Heart right ventricle (tissue), 16 donors: ENCODE measurements at regions of chr1 and their contacts with region 1.

Region 1: DNA sequence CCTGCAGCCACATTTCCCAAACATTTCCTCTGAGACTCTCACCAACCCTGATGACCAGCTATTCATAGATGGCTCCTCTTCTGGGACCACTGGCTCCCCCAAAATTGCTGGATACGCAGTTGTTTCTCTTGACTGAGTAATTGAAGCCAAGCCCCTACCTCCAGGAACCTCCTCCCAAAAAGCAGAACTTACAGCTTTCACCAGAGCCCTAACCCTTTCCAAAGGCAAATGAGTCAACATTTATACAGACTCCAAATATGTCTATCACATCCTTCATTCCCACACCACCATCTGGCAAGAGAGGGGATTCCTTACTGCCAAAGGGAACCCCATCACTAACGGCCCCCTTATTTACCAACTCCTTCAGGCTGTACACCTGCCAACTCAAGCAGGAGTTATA is 20.3 kb upstream of the CA6 start:
- DNase-seq: no peak
- ATAC-seq: no peak
- H3K4me3 ChIP-seq: no peak overlapping the region
- H3K27ac ChIP-seq: no peak overlapping the region
- H3K4me1 ChIP-seq: no peaks in the 10 kb centered on the region
- H3K27me3 ChIP-seq: no peaks in the 10 kb centered on the region
- CTCF ChIP-seq: no peak

Region 2: DNA sequence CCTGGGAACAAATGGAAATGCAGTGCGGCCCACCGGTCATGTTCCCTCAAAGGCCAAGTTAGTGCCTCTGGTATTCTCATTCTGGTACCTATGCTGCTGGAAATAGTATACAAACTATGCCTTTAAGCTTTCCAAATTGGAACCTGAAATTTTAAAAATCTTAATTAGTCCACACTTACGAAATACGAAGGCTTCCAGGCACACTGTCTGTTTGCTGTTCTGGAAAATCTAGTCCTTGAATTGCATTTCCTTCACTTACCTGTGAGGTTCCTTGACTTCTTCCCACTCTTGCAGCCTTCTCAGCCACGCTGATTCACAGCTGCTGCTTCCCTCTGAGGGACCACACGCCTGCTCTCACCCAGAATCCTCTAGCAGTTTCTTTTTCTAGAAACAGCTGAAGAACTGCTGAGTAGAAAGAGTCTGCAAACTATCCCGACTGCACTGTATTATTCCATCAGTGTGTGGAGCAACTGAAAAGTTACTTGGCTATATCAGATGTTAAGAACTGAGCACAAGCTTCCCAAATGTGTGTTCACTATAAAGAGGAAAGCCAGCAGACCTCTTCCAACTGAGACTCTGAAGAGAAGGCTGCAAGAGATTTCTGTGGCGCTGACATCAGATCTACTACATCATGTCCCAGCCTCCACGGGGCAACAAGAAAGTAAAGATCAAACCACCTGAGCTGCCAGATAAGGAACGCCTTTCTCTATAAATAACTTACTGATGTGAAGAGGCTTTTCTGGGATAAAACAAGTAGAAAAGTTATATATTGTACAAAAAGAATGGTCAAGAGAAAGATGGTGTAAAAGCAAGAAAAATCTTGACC is 334.7 kb before region 1 on chr1:
- intact Hi-C with region 1: no loop called
- DNase-seq: no peak
- ATAC-seq: peak in 7 of 8 donors; percentile 47 to 82 (median 56)
- H3K4me3 ChIP-seq: no peak overlapping the region
- H3K27ac ChIP-seq: peak overlapping the region in 1 of 10 donors; percentile 5
- H3K4me1 ChIP-seq: peaks cover 0 to 30% (median 15%) of the 10 kb centered on the region in 9 donors
- H3K27me3 ChIP-seq: no peaks in the 10 kb centered on the region
- CTCF ChIP-seq: no peak

Region 3: GRCh38 chr1:8955406-8955805 is 30.0 kb after region 1 on chr1:
- intact Hi-C with region 1: loop called in 1 of 10 experiments (anchors 5 kb)
- DNase-seq: no peak
- ATAC-seq: no peak
- H3K4me3 ChIP-seq: no peak overlapping the region
- H3K27ac ChIP-seq: no peak overlapping the region
- H3K4me1 ChIP-seq: no peaks in the 10 kb centered on the region
- H3K27me3 ChIP-seq: no peaks in the 10 kb centered on the region
- CTCF ChIP-seq: no peak

Region 4: DNA sequence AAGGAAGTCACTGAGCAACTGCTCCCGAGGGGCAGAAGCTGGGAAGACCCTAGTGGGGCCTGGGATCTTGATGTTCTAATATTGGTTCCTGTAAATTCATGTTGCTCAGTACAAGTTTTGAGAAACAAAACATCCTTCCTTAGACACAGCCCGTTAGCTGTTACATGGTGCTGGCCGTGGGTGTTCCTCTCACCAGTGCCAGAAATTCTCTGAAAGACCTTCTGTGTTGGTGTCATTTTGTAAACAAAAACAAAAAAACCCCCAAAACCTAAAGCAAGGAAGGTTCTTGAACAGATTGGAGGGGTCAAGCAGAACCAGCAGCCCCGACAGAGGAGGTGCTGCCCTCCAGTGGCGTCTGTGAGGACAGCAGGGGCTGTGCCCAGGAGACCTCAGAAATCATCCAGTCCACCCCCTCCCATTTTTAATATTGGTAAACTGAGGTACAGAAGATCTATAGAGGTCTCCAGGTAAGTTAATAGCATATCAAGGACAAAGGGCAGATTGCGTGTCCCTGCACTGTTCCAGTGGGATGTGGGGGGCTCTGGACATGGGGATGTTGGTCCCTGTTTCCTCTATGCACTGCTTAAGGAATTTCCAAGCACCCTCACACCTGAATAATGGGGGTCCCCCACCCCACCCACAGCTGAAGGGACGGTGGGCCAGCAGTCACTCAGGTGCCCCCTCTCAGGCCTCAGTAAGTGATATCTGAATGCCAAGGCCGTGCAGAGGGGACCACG is 62.6 kb after region 1 on chr1:
- intact Hi-C with region 1: loop called in 2 of 10 experiments (anchors 5 kb)
- DNase-seq: peak; percentile 31 to 66
- ATAC-seq: peak in 7 of 8 donors; percentile 61 to 79 (median 70)
- H3K4me3 ChIP-seq: no peak overlapping the region
- H3K27ac ChIP-seq: peak overlapping the region in 1 of 10 donors; percentile 74
- H3K4me1 ChIP-seq: peaks cover 0 to 25% (median 8%) of the 10 kb centered on the region in 9 donors
- H3K27me3 ChIP-seq: no peaks in the 10 kb centered on the region
- CTCF ChIP-seq: peak; percentile 78 to 96 (median 92)

Region 5: GRCh38 chr1:9004700-9005394 is 79.4 kb after region 1 on chr1:
- intact Hi-C with region 1: loop called in 1 of 10 experiments (anchors 5 kb)
- DNase-seq: peak; percentile 71 to 82
- ATAC-seq: peak; percentile 7 to 88 (median 81)
- H3K4me3 ChIP-seq: no peak overlapping the region
- H3K27ac ChIP-seq: no peak overlapping the region
- H3K4me1 ChIP-seq: peaks cover 0 to 8% (median 0%) of the 10 kb centered on the region in 9 donors
- H3K27me3 ChIP-seq: no peaks in the 10 kb centered on the region
- CTCF ChIP-seq: peak; percentile 75 to 98 (median 96)

Region 6: DNA sequence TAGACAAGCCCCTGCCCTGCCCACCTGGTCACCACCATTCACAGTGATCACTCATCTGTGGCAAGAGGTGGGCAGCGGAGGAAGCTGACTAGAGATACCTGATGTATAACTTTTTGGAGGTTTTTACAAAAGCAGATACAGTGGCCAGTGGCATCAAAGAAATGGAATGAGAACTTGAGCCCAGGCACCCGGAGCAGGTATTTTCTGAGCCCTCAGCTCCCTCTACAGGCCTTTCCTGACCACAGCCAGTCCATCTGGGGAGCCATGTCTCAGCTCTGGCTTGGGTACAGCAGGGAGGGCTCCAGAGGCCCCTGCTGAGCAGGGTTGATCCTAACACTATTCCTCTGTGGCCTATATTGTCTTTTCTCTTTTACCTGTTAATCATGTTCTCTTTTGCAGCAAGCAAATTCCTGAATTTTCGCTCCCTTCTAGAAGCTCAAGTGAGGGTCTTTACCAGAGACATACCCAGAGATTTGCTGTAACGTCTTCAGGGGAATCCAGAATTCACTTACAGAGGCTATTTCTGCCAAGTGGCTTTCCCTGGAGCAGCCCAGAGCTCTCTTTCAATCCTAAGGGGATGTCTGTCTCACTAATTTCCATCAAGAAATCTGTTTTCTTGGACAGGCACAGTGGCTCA is 176.2 kb after region 1 on chr1:
- intact Hi-C with region 1: loop called in 6 of 10 experiments (anchors 5 to 10 kb)
- DNase-seq: peak in 1 of 2 donors; percentile 41
- ATAC-seq: peak in 6 of 8 donors; percentile 57 to 69 (median 64)
- H3K4me3 ChIP-seq: no peak overlapping the region
- H3K27ac ChIP-seq: no peak overlapping the region
- H3K4me1 ChIP-seq: peaks cover 0 to 11% (median 0%) of the 10 kb centered on the region in 9 donors
- H3K27me3 ChIP-seq: no peaks in the 10 kb centered on the region
- CTCF ChIP-seq: peak; percentile 29 to 75 (median 64)